ENCODE measurements at regions of chrX and their contacts with region 1.

Region 1: DNA sequence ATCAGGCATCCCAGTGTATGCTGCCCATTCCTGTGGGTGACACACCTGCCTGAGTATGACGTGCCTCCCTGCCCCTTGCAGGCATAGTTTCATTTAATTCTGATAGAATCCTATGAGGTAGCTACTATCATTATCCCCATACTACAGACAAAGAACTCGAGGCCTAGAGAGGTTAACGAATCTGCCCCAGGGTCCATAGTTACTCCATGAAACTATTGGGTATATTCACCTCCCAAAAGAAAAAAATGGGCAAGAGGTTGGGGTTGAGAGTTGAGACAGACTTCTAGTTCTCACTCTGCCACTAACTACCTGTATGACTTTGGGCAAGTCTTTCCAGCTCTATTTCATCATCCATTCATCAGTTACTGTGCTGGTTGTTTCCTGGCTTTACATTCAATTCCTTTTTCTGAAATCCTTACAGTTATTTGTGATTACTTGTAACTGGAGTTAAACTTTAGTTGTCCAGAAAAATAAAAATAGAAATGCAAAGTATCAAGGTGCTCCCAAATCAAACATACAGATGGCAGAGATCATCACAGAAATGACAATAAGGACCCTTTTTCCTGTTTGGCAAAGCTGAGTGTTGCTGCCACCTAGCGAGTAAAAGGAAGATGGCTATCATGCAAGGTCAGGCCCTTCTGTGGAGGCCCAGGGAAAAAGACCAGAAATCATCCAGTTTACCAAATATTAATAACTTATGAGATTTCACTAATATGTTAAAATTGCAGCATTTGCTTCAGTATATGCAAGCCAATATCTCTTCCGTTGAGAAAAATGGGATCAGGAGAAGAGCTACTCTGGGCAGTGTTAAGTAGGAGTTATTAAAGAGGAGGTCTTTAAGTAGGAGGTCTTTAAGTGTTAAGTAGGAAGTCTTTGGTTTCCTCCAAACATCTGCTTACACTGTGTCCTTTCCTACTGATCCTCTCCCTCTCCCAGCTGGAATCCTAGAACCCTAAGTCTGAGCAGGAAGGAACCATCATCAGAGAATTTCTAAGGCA is 17.1 kb upstream of the MAP7D3 start:
- DNase-seq: peak in 1 of 2 experiments; percentile 46
- H3K4me3 ChIP-seq: no peak overlapping the region
- H3K27ac ChIP-seq: no peak overlapping the region
- H3K4me1 ChIP-seq: peaks cover 19% of the 10 kb centered on the region
- H3K27me3 ChIP-seq: no peaks in the 10 kb centered on the region
- CTCF ChIP-seq: peak; percentile 91

Region 2: DNA sequence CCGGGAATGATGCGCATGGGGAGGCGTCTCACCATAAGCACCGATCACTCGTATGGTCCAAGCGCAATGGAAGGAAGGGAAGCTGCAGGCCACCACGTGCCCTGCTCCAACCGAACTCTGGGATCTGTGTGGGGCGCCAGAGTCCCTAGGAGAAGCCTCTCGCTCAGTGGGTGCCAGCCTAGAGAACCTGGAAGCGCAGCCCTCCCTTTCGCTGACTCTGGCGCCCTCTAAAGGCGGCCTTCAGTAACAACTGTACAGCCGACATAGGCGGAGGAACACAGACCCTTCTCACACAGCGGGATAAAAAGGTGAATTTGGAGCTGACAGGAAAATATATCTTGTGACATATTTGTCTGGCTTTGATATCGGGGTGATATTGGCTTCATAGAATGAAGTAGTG is 671.9 kb before region 1 on chrX:
- CTCF ChIA-PET with region 1: no interaction called
- POLR2A ChIA-PET with region 1: no interaction called
- intact Hi-C with region 1: no loop called
- DNase-seq: no peak
- H3K4me3 ChIP-seq: no peak overlapping the region
- H3K27ac ChIP-seq: no peak overlapping the region
- H3K4me1 ChIP-seq: no peaks in the 10 kb centered on the region
- H3K27me3 ChIP-seq: no peaks in the 10 kb centered on the region
- CTCF ChIP-seq: peak; percentile 46

Region 3: GRCh38 chrX:136028251-136028984 is 239.9 kb before region 1 on chrX:
- CTCF ChIA-PET with region 1: interaction called, 5 read pairs
- POLR2A ChIA-PET with region 1: no interaction called
- intact Hi-C with region 1: loop called (anchors 1 kb)
- DNase-seq: peak in 1 of 2 experiments; percentile 58
- H3K4me3 ChIP-seq: no peak overlapping the region
- H3K27ac ChIP-seq: no peak overlapping the region
- H3K4me1 ChIP-seq: no peaks in the 10 kb centered on the region
- H3K27me3 ChIP-seq: no peaks in the 10 kb centered on the region
- CTCF ChIP-seq: peak; percentile 87

Region 4: DNA sequence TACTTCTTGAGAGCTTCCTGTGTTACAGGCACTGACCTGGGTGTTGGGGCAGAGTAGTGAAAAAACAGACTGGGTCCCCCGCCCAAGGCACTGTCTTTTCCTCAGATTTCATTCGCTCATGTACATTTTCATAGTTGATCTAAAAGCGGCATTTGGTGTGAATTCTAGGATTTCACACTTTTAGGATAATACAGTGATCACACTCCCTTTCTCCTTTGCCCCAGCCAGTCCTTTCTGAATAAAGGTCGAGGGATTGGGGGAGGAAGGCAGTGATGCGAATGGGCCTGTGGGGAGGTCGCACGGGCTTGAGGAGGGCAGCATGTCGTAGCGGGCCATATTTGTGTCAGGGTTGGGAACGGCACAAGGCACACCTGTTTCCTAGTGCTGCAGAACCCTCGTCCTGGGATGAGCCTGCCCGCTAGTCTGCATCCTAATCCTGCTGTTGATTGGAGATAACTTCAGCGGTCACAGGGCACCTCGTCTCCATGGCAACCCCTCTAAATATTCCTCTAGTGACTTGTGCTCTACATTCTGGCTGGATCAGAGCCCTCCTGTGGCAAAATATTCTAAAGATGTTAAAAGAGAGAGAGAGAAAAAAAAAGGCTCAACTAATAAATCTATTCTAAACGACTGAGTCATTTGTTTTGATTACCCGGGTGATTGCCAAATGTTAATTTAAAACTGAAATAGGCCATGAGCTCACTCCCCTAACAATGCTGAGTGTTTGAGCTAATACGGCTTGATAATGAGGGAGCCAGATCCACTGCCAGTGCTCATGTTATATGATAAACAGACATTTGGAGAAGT is 99.2 kb before region 1 on chrX:
- CTCF ChIA-PET with region 1: interaction called, 3 read pairs
- POLR2A ChIA-PET with region 1: no interaction called
- intact Hi-C with region 1: loop called (anchors 2 kb)
- DNase-seq: peak; percentile 33 to 94
- H3K4me3 ChIP-seq: no peak overlapping the region
- H3K27ac ChIP-seq: no peak overlapping the region
- H3K4me1 ChIP-seq: peaks cover 42% of the 10 kb centered on the region
- H3K27me3 ChIP-seq: no peaks in the 10 kb centered on the region
- CTCF ChIP-seq: no peak

Region 5: GRCh38 chrX:136496770-136497598 is 228.6 kb after region 1 on chrX and contains the start of gene HTATSF1:
- CTCF ChIA-PET with region 1: interaction called, 6 read pairs
- POLR2A ChIA-PET with region 1: no interaction called
- intact Hi-C with region 1: loop called (anchors 2 kb)
- DNase-seq: peak; percentile 84 to 87
- H3K4me3 ChIP-seq: peak within 1 kb of the TSS; percentile 93
- H3K27ac ChIP-seq: peak within 1 kb of the TSS; percentile 94
- H3K4me1 ChIP-seq: peaks cover 23% of the 10 kb centered on the region
- H3K27me3 ChIP-seq: no peaks in the 10 kb centered on the region
- CTCF ChIP-seq: no peak
- total RNA-seq, gene HTATSF1: 64.3 and 72.4 TPM in 2 replicates

Region 6: DNA sequence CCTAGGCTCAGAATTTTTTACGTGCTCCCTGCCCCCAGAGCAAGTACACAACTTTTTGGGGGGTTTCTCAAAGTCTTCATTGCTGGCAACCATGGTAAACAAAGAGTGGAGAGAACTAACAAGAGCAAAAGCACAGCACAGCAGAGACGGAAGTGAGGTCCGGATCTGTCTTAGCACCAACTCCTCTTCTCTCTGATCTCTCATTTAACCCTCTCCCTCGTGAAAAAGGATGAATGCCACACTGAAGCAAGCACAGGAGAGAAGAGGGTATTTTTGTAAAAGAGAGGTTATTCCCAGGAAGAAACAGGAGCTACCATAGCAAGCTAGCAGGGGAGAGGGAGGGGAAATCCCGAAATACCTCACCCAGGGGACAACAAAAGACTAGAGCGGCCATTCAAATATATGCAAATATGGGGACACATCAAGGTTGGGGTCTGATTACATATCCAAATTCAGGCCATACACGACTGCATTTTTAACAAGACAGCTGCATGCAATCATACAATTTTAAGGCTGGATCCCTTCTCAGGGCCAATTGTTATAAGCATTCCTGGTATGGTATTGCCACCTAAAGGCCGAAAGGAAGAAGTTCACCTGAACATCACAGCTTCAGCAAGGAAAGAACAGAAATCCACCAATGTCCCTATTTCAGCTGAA is 426.2 kb after region 1 on chrX:
- CTCF ChIA-PET with region 1: interaction called, 3 read pairs
- POLR2A ChIA-PET with region 1: no interaction called
- intact Hi-C with region 1: loop called (anchors 2 kb)
- DNase-seq: peak in 1 of 2 experiments; percentile 57
- H3K4me3 ChIP-seq: no peak overlapping the region
- H3K27ac ChIP-seq: no peak overlapping the region
- H3K4me1 ChIP-seq: peaks cover 17% of the 10 kb centered on the region
- H3K27me3 ChIP-seq: no peaks in the 10 kb centered on the region
- CTCF ChIP-seq: peak; percentile 90

Region 7: DNA sequence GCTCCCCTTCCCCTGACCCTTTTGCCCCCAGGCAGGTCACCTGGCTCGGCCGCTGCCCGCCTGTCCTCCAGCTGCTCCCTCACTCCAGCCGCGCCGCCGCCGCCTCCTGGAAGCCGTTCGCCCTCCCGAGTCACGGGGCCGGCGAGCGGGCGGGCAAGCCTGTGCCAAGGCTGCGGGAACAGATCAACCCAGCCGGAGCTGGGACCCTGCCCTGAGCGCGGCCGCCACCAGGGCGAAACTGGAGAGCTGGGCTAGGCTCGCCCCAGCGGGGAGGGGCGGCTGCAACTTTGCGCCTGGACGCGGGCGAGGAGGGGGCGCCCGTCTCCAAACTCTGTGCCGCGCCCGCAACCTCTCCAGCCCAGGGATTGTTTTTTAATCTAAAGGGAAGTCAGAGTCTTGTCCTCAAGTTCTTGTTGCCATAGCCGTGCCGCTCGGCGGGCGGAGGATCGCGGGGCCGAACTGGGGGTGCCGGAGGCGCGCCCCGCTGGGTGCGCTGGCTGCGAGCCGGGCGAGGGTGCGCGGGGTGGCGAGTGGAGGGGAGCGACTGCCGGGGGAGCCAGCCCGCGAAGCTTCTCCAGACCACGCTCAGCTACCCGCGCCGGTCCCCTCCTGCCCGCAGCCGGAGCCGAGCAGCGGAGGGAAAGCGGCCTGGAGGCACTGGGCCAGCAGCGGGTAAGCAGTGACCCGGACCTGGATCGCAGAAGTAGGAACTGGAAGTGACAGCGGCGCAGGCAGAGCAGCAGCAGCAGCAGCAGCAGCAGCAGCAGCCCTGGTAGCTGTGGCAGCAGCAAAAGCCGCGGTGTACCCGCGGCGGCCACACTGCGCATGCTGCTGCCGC is 499.0 kb after region 1 on chrX:
- CTCF ChIA-PET with region 1: no interaction called
- POLR2A ChIA-PET with region 1: no interaction called
- intact Hi-C with region 1: no loop called
- DNase-seq: peak in 1 of 2 experiments; percentile 16
- H3K4me3 ChIP-seq: peak overlapping the region; percentile 73
- H3K27ac ChIP-seq: no peak overlapping the region
- H3K4me1 ChIP-seq: peaks cover 12% of the 10 kb centered on the region
- H3K27me3 ChIP-seq: no peaks in the 10 kb centered on the region
- CTCF ChIP-seq: no peak; the same call in 1 of the 2 replicates